ENCODE measurements at regions of chr9 and their contacts with region 1.

Region 1: DNA sequence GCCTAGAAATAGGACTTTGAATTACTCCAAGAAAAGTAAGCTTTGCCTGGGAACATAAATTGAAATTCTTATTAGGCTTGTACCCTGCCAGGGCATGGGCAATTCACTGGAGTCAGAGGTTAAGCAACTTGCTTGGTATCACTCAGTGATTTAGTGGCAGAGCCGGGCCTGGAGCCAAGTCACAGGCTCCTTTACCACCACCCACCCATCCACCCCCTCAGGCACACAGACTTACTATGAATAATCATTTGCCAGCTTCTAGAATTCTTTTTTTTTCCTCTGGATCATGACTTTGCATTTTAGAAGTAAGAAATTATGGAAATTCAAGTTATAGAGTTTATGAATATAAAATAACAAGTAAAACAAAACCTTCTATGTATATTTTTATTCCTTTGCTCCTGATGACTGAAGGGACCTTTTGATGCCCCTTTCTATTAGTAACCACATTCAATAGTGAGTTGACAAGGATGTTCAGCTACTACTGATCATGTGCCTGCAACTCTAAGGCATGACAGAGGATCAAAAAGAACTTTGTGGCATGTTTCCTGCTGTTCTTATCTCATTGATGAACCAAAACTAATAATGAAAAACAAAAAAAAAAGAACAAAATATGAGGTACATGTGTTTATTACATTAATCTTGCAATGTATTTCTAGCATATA is 614.7 kb downstream of the TLR4 start:
- DNase-seq: peak; percentile 54 to 68
- H3K4me3 ChIP-seq: no peak overlapping the region
- H3K27ac ChIP-seq: peak overlapping the region; percentile 75
- H3K4me1 ChIP-seq: peaks cover 15% of the 10 kb centered on the region
- H3K27me3 ChIP-seq: no peaks in the 10 kb centered on the region
- CTCF ChIP-seq: no peak

Region 2: GRCh38 chr9:118281772-118282171 is 37.1 kb before region 1 on chr9:
- CTCF ChIA-PET with region 1: no interaction called
- POLR2A ChIA-PET with region 1: no interaction called
- intact Hi-C with region 1: no loop called
- DNase-seq: no peak
- H3K4me3 ChIP-seq: no peak overlapping the region
- H3K27ac ChIP-seq: no peak overlapping the region
- H3K4me1 ChIP-seq: no peaks in the 10 kb centered on the region
- H3K27me3 ChIP-seq: no peaks in the 10 kb centered on the region
- CTCF ChIP-seq: no peak

Region 3: GRCh38 chr9:118331622-118332045 is 12.7 kb after region 1 on chr9:
- CTCF ChIA-PET with region 1: no interaction called
- POLR2A ChIA-PET with region 1: interaction called, 15 read pairs
- intact Hi-C with region 1: loop called (anchors 1 kb)
- DNase-seq: peak; percentile 55 to 74
- H3K4me3 ChIP-seq: no peak overlapping the region
- H3K27ac ChIP-seq: no peak overlapping the region
- H3K4me1 ChIP-seq: peaks cover 10% of the 10 kb centered on the region; the same call in 1 of the 2 replicates
- H3K27me3 ChIP-seq: no peaks in the 10 kb centered on the region
- CTCF ChIP-seq: no peak

Measured in PC-9 (cell line).